Sigmoid colon (tissue), 7 donors: ENCODE measurements at regions of chr2 and their contacts with region 1.

Region 1: DNA sequence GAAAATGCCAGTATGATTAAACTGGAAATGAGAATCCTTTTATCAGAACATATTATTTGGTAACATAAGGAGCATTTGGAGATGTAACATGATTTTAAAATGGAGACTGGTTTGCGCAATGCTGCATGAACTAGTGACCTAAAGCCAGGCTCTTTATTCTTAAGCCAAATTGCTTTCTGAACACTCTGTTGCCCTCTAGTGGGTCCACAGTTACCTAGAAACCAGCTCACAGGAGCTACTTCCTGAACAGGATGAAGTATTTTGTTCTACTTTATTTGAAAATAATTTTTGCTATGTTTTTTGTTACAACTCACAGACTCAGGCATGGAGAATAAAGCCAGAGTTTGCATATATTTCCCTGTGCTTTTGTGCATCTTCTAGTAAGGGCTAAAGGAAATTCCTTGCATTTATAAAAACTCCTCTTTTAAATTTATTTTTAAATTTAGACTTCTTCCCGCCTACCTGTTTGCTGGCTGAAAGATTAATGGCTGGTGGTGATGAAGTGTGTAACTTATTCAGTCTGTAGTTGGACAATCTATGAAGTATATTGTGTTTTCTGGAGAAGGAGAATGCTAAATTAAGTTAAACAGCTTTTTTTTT is 146.7 kb downstream of the PARD3B start:
- DNase-seq: peak; percentile 75
- H3K4me3 ChIP-seq: no peak overlapping the region
- H3K27ac ChIP-seq: peak overlapping the region in 2 of 4 donors; percentile 3 to 8
- H3K4me1 ChIP-seq: peaks cover 0 to 56% (median 35%) of the 10 kb centered on the region in 4 donors
- H3K27me3 ChIP-seq: no peaks in the 10 kb centered on the region
- CTCF ChIP-seq: peak; percentile 47 to 74 (median 64)
- EP300 ChIP-seq: peak in 1 of 4 donors; percentile 28
- POLR2A ChIP-seq: no peak

Region 2: DNA sequence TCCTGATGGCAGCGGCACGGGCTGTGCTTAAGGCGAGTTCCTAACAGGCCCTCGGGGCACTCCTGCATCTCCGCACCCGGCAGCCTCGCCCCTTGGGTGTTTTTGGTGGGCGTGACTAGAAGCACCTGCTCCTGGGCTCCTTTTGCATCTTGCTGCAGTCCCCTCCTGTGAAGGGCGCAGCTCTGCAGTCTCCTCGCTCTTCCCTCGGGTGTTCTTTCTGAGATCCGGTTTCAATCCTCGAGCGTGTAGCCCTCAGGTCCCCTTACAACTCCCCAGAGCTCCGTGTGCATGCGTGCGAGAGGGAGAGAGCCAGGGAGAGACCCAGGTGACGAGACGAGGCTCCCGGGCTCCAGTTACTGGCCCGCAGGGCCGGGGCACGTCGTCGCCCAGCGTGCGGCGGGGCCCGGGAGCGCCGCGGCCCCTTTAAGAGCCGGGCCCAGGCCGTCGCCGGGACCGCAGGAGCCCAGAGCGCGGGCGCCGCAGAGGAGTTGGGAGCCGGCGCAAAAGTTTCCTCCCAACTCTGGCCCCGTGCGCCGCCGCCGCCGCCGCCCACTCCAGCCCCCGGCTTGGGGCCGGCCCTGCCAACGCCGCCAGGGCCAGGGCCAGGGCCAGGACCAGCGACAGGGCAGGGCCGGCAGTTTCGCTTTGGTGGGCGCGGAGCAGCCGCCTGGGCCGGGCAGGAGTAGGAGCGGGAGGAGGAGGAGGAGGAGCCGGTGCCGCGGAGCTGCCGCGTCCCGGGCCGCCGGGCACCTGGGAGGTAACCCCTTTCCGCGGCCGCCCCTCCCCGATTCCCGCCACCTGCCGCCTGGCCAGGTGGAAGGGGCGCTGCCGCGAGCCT is 146.8 kb before region 1 on chr2 and contains the start of gene PARD3B:
- intact Hi-C with region 1: loop called (anchors 2 kb)
- DNase-seq: peak; percentile 78
- H3K4me3 ChIP-seq: peak within 1 kb of the TSS; percentile 93 to 99 (median 96)
- H3K27ac ChIP-seq: peak within 1 kb of the TSS; percentile 93 to 95 (median 94)
- H3K4me1 ChIP-seq: peaks cover 0 to 46% (median 33%) of the 10 kb centered on the region in 4 donors
- H3K27me3 ChIP-seq: no peaks in the 10 kb centered on the region
- CTCF ChIP-seq: no peak
- EP300 ChIP-seq: no peak
- POLR2A ChIP-seq: no peak
- total RNA-seq, gene PARD3B: 42.5 to 64.0 (median 52.7) TPM